ENCODE measurements at regions of chr3 and their contacts with region 1.

Region 1: GRCh38 chr3:190155752-190156151 is 35.1 kb upstream of the P3H2 start:
- DNase-seq: peak; percentile 59 to 79
- H3K4me3 ChIP-seq: no peak overlapping the region
- H3K27ac ChIP-seq: peak overlapping the region; percentile 27
- H3K4me1 ChIP-seq: peaks cover 10% of the 10 kb centered on the region; the same call in 1 of the 2 replicates
- H3K27me3 ChIP-seq: no peaks in the 10 kb centered on the region
- CTCF ChIP-seq: no peak

Region 2: DNA sequence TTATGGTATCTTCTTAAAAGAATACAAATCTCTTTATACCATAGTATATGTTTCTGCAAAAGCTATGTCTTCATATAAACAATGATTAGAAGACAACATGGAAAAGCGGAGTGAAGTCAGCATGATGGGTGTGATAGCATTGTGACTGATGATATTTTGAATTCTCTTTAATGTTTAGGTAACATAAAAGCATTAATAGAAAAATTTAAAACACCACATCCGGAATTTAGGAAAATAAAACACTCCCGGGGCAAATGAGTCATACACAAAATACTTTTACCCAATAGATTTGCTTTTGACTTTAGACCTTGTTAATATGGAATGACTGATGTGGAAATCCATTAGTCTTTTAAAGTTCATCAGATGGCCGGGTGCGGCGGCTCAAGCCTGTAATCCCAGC is 169.8 kb before region 1 on chr3:
- CTCF ChIA-PET with region 1: no interaction called
- POLR2A ChIA-PET with region 1: no interaction called
- intact Hi-C with region 1: no loop called
- DNase-seq: no peak
- H3K4me3 ChIP-seq: no peak overlapping the region
- H3K27ac ChIP-seq: no peak overlapping the region
- H3K4me1 ChIP-seq: peaks cover 12% of the 10 kb centered on the region
- H3K27me3 ChIP-seq: no peaks in the 10 kb centered on the region
- CTCF ChIP-seq: no peak

Region 3: DNA sequence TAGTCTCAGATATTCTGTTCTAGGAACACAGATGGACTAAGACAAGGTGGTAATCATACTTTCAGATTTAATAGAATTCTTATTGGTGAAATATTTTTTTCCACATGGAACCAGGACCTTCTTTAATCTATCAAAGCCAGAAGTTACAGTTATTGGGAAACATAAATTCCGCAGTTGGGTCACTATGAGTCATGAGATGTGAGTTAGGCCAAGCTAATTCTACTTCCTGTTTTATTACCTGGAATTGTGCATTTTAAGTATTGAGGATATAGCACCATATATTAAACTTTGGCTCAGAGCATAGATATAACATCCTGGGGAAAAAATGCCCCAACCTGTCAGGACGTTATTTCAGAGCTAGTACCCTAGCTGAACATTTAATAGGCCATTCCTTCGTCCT is 61.3 kb after region 1 on chr3:
- CTCF ChIA-PET with region 1: interaction called, 15 read pairs
- POLR2A ChIA-PET with region 1: no interaction called
- intact Hi-C with region 1: no loop called
- DNase-seq: peak in 1 of 2 experiments; percentile 54
- H3K4me3 ChIP-seq: no peak overlapping the region
- H3K27ac ChIP-seq: no peak overlapping the region
- H3K4me1 ChIP-seq: peaks cover 7% of the 10 kb centered on the region
- H3K27me3 ChIP-seq: no peaks in the 10 kb centered on the region
- CTCF ChIP-seq: no peak

Region 4: DNA sequence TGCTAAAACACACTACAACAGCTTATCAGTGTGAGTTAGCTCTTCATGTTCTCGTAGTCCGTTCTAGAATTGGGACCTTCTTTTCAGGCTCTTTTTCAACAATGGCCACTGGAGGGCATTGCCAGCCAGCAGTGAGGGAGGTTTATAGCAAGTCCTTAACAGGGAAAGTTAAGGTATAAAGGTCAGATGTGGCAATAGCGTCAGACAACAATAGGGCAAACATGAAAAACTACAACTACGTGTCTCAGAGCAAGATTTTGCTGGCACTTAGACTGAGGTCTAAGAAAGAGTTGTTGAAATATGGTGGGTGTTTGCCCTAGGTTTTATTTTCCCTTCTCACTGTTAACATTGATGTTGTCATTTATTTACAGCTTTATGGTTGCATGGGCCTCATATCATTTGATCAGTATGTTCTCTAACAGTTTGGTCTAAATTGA is 545.4 kb after region 1 on chr3:
- CTCF ChIA-PET with region 1: no interaction called
- POLR2A ChIA-PET with region 1: no interaction called
- intact Hi-C with region 1: no loop called
- DNase-seq: peak; percentile 65 to 81
- H3K4me3 ChIP-seq: no peak overlapping the region
- H3K27ac ChIP-seq: no peak overlapping the region
- H3K4me1 ChIP-seq: peaks cover 21% of the 10 kb centered on the region; the same call in 1 of the 2 replicates
- H3K27me3 ChIP-seq: no peaks in the 10 kb centered on the region
- CTCF ChIP-seq: peak; percentile 87